ENCODE measurements at regions of chr1 and their contacts with region 1.

Region 1: GRCh38 chr1:101238681-101239094 is 1.9 kb downstream of the S1PR1 start:
- DNase-seq: peak; percentile 58 to 95 (median 75)

Region 2: GRCh38 chr1:100921109-100921706 is 317.5 kb before region 1 on chr1:
- intact Hi-C with region 1: loop called (anchors 5 kb)
- DNase-seq: no peak

Region 3: DNA sequence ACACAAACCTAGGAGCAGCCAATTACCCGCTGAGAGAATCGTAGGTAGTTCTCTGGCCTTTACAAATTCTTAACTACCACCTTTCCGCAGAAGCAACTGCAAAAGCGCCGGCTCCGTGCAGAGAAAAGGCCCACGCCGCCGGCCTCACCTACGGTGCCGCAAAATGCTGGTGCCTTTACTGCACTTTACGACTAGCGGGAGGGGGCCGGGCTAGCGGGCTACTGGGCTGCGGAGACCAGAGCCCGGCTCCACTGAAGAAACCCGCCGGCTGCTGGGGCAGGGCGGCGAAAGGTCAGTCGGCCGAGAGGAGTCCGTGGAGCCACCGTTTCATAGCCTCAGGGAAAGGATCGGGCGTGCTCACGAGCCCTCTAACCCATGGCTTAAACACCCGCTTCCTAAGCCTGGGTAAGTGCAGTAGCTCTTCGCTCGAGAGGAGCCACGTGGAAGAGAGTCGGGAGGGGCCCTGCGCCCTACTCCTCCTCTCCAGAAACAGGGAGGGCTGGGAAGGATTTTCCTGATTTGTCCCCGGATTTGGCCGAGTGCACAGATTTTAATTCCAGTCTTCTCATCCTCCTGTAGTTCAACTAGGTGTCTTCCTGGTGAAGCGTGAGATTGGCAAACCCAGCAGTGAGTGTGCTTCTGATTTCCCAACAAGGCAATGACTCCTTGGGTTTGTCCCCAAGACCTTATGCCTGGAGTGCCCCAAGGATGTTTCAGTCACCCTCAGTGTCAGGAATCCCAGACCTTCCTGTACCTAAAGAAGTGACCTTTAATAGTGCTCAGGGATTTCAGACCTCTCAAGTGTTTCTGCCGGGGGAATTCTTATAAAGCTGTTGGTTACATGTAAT is 212.8 kb before region 1 on chr1 and contains the start of gene DPH5:
- intact Hi-C with region 1: loop called (anchors 10 kb)
- DNase-seq: peak; percentile 83 to 98 (median 90)

Region 4: DNA sequence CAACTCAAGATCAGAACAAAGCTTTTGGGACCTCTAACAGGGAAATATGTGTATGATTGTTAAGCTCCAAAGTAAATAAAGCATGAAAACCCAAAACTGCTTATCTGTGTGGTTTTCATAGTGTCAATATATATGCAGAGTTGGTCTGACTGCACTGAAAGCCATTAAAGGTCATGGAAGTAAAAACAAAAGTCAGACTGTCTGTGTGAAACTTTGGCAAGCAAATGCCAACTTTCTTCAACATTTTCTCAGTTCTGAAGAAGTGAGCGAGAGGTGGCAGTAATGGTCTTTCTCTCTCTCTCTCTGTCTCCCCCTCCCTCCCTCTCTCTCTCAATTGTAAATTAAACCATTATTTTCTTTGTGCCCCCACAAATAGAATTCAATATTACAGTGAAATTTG is 101.9 kb before region 1 on chr1:
- intact Hi-C with region 1: loop called (anchors 5 kb)
- DNase-seq: no peak

Measured in posterior cingulate gyrus (tissue), 11 donors.